Calu3 (cell line): ENCODE measurements at regions of chr2 and their contacts with region 1.

Region 1: GRCh38 chr2:108351889-108352288 is 25.9 kb upstream of the SULT1C4 start:
- DNase-seq: no peak
- H3K4me3 Mint-ChIP-seq: no peak overlapping the region
- H3K27ac Mint-ChIP-seq: no peak overlapping the region
- H3K4me1 Mint-ChIP-seq: no peaks in the 10 kb centered on the region
- H3K27me3 Mint-ChIP-seq: no peaks in the 10 kb centered on the region
- CTCF ChIP-seq: no peak

Region 2: GRCh38 chr2:107570876-107571275 is 781.0 kb before region 1 on chr2:
- CTCF ChIA-PET with region 1: no interaction called
- intact Hi-C with region 1: no loop called
- DNase-seq: no peak
- H3K4me3 Mint-ChIP-seq: no peak overlapping the region
- H3K27ac Mint-ChIP-seq: no peak overlapping the region
- H3K4me1 Mint-ChIP-seq: no peaks in the 10 kb centered on the region
- H3K27me3 Mint-ChIP-seq: no peaks in the 10 kb centered on the region
- CTCF ChIP-seq: no peak

Region 3: GRCh38 chr2:108492364-108492763 is 140.5 kb after region 1 on chr2:
- CTCF ChIA-PET with region 1: no interaction called
- intact Hi-C with region 1: loop called (anchors 5 kb)
- DNase-seq: no peak
- H3K4me3 Mint-ChIP-seq: no peak overlapping the region
- H3K27ac Mint-ChIP-seq: no peak overlapping the region
- H3K4me1 Mint-ChIP-seq: peaks cover 8% of the 10 kb centered on the region
- H3K27me3 Mint-ChIP-seq: no peaks in the 10 kb centered on the region
- CTCF ChIP-seq: no peak